ENCODE measurements at regions of chr13 and their contacts with region 1.

Region 1: DNA sequence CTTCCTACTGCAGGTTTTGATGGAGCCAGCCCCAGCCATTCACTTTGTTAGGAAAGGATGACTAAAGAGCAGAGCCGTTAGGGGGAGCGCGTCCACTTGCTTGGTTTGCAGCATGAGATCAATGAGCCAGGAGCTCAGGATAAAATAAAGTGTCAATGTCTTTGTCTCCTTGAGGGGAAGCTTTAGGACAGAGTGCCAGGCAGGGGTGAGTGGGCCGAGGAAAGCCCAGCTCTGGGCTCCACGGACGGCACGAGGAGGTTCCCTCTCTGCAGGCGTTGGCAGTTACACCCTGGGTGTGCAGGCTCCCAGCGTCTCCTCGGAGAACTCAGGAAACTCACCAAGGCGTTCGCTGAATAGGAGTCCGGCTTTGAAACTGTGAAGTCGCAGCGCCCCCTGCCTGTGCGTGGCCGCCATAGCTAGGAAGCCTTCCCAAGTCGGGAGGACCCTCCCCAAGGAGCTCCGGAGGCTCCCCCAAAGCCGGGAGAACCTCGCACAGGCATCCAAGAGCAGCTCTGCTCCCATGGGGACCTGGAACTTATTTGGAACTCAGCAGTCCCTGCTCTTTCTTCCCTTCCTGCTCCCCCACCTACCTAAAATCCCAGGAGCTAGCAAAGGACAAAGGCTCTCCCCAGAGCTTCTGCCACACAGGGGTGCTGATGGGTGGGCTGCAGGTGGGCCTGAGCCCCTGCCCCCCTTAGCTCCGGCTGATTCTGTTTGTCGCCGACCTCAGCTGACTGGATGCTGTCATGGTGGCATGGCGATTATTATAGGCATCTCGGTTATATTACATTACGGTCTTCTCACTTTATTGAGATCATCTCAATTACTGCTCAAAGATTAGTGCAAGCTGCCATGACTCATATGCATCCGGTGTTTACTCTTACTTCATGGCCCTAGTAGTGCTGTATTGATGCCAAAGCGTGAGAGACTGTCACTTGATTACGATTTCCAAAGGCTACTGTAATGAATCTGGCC is 34.4 kb downstream of the GSX1 start:
- DNase-seq: peak; percentile 85
- H3K4me3 ChIP-seq: peak overlapping the region in 1 of 4 donors; percentile 25
- H3K27ac ChIP-seq: no peak overlapping the region
- H3K4me1 ChIP-seq: peaks cover 0 to 19% (median 12%) of the 10 kb centered on the region in 4 donors
- H3K27me3 ChIP-seq: peaks cover 65% of the 10 kb centered on the region
- CTCF ChIP-seq: peak; percentile 91 to 94 (median 94)
- EP300 ChIP-seq: no peak
- POLR2A ChIP-seq: no peak

Region 2: GRCh38 chr13:26929971-26930730 is 896.5 kb before region 1 on chr13:
- in situ Hi-C with region 1: loop called in 1 of 4 experiments (anchors 25 kb)
- intact Hi-C with region 1: no loop called
- DNase-seq: peak; percentile 72
- H3K4me3 ChIP-seq: no peak overlapping the region
- H3K27ac ChIP-seq: no peak overlapping the region
- H3K4me1 ChIP-seq: peaks cover 0 to 6% (median 2%) of the 10 kb centered on the region in 4 donors
- H3K27me3 ChIP-seq: no peaks in the 10 kb centered on the region
- CTCF ChIP-seq: peak; percentile 76 to 98 (median 96)
- EP300 ChIP-seq: no peak
- POLR2A ChIP-seq: no peak

Region 3: GRCh38 chr13:27362064-27362883 is 464.4 kb before region 1 on chr13:
- in situ Hi-C with region 1: loop called in 1 of 4 experiments (anchors 5 kb)
- intact Hi-C with region 1: no loop called
- DNase-seq: peak; percentile 92
- H3K4me3 ChIP-seq: peak overlapping the region; percentile 28 to 50 (median 32)
- H3K27ac ChIP-seq: peak overlapping the region; percentile 11 to 52 (median 21)
- H3K4me1 ChIP-seq: peaks cover 0 to 17% (median 9%) of the 10 kb centered on the region in 4 donors
- H3K27me3 ChIP-seq: peaks cover 5% of the 10 kb centered on the region
- CTCF ChIP-seq: peak; percentile 90 to 96 (median 94)
- EP300 ChIP-seq: no peak
- POLR2A ChIP-seq: no peak

Region 4: DNA sequence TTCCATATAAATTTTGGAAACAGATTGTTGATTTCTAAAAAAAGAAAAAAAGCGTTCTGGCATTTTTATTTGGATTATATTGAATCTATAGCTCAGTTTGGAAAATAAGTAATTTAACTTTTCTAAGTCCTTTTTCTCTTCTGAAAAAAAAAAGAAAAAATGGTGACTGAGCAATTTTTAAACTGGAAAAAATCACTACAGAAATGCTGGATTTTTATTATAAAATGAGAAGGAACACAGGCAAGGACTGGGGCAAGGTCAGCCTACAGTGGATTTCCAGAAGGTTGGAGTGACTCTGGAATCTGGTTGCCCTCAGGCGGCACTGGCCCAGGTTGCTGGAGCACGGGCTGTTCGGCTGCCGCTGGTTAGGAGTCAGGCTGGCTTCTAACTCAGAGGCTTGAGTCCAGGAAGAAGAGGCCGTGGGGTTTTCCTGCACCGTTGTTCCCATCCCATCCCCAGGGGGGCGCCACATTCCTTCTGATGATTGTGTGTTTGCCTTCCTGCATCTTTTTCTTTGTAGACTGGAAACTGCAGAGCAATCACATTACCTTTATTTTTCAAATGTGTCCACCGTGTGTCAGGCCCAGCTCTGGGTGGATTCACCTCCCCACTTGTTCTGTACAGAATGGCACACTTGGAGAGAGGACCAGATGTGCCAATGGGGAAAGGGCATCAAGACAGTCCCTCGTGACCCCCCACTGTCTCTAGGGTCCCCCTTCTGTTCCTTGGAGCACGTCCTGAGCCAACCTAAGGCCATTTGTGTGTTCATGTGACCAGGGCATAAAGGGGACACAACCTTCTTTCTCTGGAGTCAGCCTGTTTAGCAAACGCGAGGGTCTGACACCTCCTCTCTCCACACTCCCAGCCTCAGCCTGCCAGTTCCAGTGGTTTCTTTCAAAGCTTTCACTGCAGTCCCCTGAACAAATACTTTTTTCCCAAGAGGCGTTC is 446.7 kb before region 1 on chr13:
- in situ Hi-C with region 1: loop called in 3 of 4 experiments (anchors 5 to 10 kb)
- intact Hi-C with region 1: no loop called
- DNase-seq: peak; percentile 88
- H3K4me3 ChIP-seq: no peak overlapping the region
- H3K27ac ChIP-seq: no peak overlapping the region
- H3K4me1 ChIP-seq: peaks cover 0 to 10% (median 0%) of the 10 kb centered on the region in 4 donors
- H3K27me3 ChIP-seq: peaks cover 7% of the 10 kb centered on the region
- CTCF ChIP-seq: peak; percentile 46 to 80 (median 70)
- EP300 ChIP-seq: no peak
- POLR2A ChIP-seq: no peak

Region 5: DNA sequence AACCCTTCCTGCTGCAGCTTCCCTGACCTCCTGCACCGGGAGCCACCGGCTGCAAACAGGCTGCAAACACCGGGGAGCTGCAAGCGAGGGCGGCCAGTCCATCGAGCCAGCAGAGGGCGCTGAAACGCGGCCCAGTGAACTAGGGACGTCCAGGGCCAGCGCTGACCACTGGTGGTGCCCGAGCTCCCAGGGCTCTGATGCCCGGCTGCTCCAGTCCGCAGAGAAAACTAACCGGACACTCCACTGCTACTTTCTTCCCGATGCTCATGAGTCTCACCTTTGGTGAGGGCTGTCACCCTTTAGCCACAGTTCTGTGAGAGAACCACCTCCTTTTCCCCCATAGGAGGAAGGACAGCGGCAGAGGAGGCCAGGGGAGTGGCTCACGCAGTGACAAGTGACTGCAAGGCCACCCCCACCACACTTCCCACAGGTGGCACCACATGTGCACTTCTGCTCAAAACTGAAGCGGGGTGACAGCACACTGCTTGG is 293.5 kb before region 1 on chr13:
- in situ Hi-C with region 1: loop called in 1 of 4 experiments (anchors 5 kb)
- intact Hi-C with region 1: loop called (anchors 2 kb)
- DNase-seq: peak; percentile 87
- H3K4me3 ChIP-seq: peak overlapping the region in 1 of 4 donors; percentile 21
- H3K27ac ChIP-seq: no peak overlapping the region
- H3K4me1 ChIP-seq: peaks cover 0 to 9% (median 3%) of the 10 kb centered on the region in 4 donors
- H3K27me3 ChIP-seq: no peaks in the 10 kb centered on the region
- CTCF ChIP-seq: peak; percentile 83 to 91 (median 90)
- EP300 ChIP-seq: no peak
- POLR2A ChIP-seq: no peak